ENCODE measurements at regions of chr11 and their contacts with region 1.

Region 1: DNA sequence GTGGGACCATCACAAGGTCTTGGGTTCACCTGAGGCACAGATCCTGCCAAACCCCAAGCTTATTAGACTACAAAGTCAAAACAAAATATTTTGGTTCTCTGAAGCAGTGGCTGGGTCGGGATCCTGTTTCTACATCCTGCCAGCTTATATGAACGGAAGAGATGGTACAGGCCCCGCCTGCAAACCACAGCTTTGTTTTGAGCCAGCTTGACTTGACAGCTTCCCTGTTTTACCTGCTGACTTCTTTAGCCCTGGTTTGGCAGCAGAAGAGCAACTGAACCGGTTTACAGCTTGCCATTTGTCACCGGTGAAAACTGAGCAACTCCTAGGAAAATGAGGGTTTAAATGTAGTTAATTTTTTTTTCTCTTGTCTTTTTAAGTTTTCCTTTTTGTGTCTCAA is 11.4 kb downstream of the PACS1 start:
- DNase-seq: peak; percentile 87
- H3K4me3 Mint-ChIP-seq: peak overlapping the region; percentile 83
- H3K27ac Mint-ChIP-seq: peak overlapping the region; percentile 100
- H3K4me1 Mint-ChIP-seq: peaks cover 65% of the 10 kb centered on the region
- H3K27me3 Mint-ChIP-seq: no peaks in the 10 kb centered on the region

Region 2: GRCh38 chr11:65961232-65961901 is 120.1 kb before region 1 on chr11 and contains the start of gene SART1:
- CTCF ChIA-PET with region 1: no interaction called
- POLR2A ChIA-PET with region 1: no interaction called
- DNase-seq: peak; percentile 96
- H3K4me3 Mint-ChIP-seq: peak within 1 kb of the TSS; percentile 98
- H3K27ac Mint-ChIP-seq: peak within 1 kb of the TSS; percentile 96
- H3K4me1 Mint-ChIP-seq: peaks cover 52% of the 10 kb centered on the region
- H3K27me3 Mint-ChIP-seq: no peaks in the 10 kb centered on the region
- total RNA-seq, gene SART1: 59.5 to 61.5 TPM

Region 3: GRCh38 chr11:66035653-66036333 is 45.7 kb before region 1 on chr11:
- CTCF ChIA-PET with region 1: no interaction called
- POLR2A ChIA-PET with region 1: no interaction called
- DNase-seq: no peak
- H3K4me3 Mint-ChIP-seq: no peak overlapping the region
- H3K27ac Mint-ChIP-seq: no peak overlapping the region
- H3K4me1 Mint-ChIP-seq: no peaks in the 10 kb centered on the region
- H3K27me3 Mint-ChIP-seq: peaks cover 12% of the 10 kb centered on the region

Region 4: DNA sequence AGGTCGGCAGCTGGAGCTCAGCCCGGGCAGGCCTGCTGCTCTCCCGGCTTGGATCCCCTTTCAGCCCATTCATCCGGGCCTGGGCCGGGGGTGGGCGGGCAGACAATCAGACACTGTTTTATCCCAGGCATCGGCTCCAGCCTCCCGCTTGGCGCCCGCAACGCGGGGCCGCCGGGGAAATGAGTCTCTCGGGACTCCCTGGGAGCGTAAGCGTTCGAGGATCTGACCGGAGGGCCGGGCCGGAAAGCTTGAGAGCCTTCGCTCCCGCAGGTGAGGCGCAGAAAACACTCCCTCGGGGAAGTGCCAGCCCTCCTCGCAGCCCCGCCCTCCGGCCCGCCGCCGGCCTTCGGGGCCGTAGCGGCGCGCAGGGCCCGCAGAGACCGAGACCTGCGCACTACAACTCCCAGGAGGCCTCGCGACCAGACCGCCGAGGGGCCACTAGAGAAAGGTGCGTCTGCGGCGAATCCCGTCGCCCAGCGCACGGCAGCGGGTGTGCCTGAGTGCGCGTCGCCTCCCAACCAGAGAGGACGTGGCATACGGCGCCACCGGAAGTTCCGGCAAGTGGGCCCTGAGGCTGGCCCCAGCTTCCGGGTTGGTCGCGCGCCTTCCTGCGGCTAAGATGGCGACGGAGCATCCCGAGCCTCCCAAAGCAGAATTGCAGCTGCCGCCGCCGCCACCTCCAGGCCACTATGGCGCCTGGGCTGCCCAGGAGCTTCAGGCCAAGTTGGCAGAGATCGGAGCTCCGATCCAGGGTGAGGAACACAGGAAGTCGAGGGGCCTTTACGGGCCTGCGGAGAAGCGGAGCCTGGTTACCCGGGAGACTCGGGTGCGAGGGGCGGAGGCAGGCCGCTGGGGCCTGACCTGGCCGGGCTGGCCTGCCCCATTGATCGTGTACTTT is 29.5 kb before region 1 on chr11 and contains the start of gene SF3B2:
- CTCF ChIA-PET with region 1: interaction called, 8 read pairs
- POLR2A ChIA-PET with region 1: interaction called, 19 read pairs
- DNase-seq: peak; percentile 98
- H3K4me3 Mint-ChIP-seq: peak within 1 kb of the TSS; percentile 100
- H3K27ac Mint-ChIP-seq: peak within 1 kb of the TSS; percentile 96
- H3K4me1 Mint-ChIP-seq: peaks cover 37% of the 10 kb centered on the region
- H3K27me3 Mint-ChIP-seq: peaks cover 2% of the 10 kb centered on the region
- total RNA-seq, gene SF3B2: 230 to 241 TPM

Region 5: DNA sequence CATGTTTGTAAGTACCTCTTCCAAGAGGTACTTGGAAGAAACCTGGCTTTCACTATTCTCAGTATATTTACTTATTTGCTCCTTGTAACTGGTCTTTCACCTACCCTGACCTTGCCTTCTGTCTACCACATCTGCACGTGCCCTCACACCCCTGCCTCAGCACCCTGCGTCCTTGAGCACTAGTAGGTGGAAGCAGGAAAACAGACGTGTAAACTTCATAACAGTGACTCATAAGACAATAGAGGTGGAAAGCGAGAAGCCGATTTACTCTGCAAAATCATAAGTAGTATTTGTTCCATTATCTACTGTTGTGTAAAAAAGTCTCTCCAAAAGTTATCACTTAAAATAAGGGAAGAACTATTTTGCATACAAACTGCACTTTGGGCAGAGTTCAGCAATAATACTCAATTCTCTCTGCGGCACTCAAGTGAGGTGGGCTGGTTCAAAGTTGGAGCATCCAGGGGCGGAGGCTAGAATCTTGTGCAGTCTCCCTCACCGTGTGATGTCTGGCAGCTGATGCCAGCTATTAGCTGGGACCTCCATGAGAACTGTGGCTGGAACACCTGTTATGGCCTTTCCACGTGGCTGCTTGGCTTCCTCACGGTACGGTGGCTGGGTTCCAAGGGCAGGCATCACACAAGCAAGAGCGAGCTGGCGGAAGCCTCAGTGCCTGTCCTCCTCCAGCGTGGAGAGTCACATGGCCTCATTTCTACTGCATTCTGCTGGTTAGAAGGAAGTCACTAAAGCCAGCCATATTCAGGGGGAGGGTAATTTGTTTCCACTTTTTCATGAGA is 19.0 kb after region 1 on chr11:
- CTCF ChIA-PET with region 1: interaction called, 4 read pairs
- POLR2A ChIA-PET with region 1: interaction called, 27 read pairs
- DNase-seq: peak; percentile 76
- H3K4me3 Mint-ChIP-seq: peak overlapping the region; percentile 60
- H3K27ac Mint-ChIP-seq: peak overlapping the region; percentile 87
- H3K4me1 Mint-ChIP-seq: peaks cover 39% of the 10 kb centered on the region
- H3K27me3 Mint-ChIP-seq: no peaks in the 10 kb centered on the region

Region 6: DNA sequence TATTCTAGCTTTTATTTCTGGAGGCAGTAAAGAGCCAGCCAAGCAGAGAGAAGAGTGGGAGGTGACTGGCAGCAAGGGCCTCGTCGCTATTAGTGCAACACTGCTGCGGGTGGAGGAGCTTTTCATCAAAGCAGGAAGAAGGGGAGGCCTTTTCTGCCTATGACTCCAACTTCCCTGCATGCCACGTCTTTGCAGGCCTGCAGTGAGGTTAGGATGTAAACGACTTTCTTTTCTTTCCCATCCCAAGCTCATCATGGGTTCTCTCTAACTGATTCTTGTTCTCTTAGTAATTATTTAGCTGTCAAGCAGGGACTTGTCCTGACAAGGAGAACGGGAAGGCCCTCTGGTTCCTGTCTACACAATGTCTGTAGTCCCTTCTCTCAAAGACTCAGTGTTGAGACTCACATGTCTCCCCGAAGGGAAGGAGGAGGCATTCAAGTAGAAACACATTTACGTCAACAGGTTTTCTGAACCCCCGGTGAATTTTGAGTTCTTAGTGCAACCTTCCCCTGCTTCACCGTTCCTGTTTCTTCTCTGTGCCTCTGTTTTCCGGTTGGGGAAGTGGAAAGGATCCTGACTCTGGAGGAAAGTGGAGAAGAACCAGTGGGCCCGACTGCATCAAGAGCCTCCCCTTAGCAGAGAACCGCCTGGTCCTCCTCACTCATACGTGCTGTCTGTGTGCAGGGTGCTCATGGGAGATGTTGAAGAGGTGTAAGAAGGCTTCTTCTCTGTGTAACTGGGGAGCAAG is 45.5 kb after region 1 on chr11:
- CTCF ChIA-PET with region 1: interaction called, 5 read pairs
- POLR2A ChIA-PET with region 1: interaction called, 18 read pairs
- DNase-seq: peak; percentile 62
- H3K4me3 Mint-ChIP-seq: peak overlapping the region; percentile 35
- H3K27ac Mint-ChIP-seq: peak overlapping the region; percentile 82
- H3K4me1 Mint-ChIP-seq: peaks cover 52% of the 10 kb centered on the region
- H3K27me3 Mint-ChIP-seq: no peaks in the 10 kb centered on the region

Region 7: GRCh38 chr11:66222358-66223149 is 141.0 kb after region 1 on chr11:
- CTCF ChIA-PET with region 1: no interaction called
- POLR2A ChIA-PET with region 1: no interaction called
- DNase-seq: peak; percentile 93
- H3K4me3 Mint-ChIP-seq: no peak overlapping the region
- H3K27ac Mint-ChIP-seq: peak overlapping the region; percentile 77
- H3K4me1 Mint-ChIP-seq: peaks cover 25% of the 10 kb centered on the region
- H3K27me3 Mint-ChIP-seq: no peaks in the 10 kb centered on the region

Measured in activated CD4-positive, alpha-beta memory T cell treated with anti-CD3 and anti-CD28 coated beads, Interleukin-2, amount 10 ng/mL, durations not matched to agents 7 days and 5 days (primary cell).